AG04450 (cell line): ENCODE measurements at regions of chr5 and their contacts with region 1.

Region 1: GRCh38 chr5:59724482-59725391 is 168.8 kb downstream of the PDE4D start:
- DNase-seq: peak; percentile 11
- H3K4me3 ChIP-seq: no peak overlapping the region
- H3K27ac ChIP-seq: no peak overlapping the region
- H3K27me3 ChIP-seq: no peaks in the 10 kb centered on the region
- CTCF ChIP-seq: peak; percentile 71

Region 2: GRCh38 chr5:59709846-59710245 is 14.9 kb before region 1 on chr5:
- CTCF ChIA-PET with region 1: interaction called, 11 read pairs
- POLR2A ChIA-PET with region 1: no interaction called
- DNase-seq: peak; percentile 34
- H3K4me3 ChIP-seq: no peak overlapping the region
- H3K27ac ChIP-seq: no peak overlapping the region
- H3K27me3 ChIP-seq: no peaks in the 10 kb centered on the region
- CTCF ChIP-seq: no peak

Region 3: GRCh38 chr5:60323596-60323995 is 598.9 kb after region 1 on chr5:
- CTCF ChIA-PET with region 1: no interaction called
- POLR2A ChIA-PET with region 1: no interaction called
- DNase-seq: no peak
- H3K4me3 ChIP-seq: no peak overlapping the region
- H3K27ac ChIP-seq: no peak overlapping the region
- H3K27me3 ChIP-seq: no peaks in the 10 kb centered on the region
- CTCF ChIP-seq: no peak